Gastrocnemius medialis (tissue), 4 donors: ENCODE measurements at regions of chr5 and their contacts with region 1.

Region 1: GRCh38 chr5:147558826-147559225 is 49.0 kb upstream of the DPYSL3 start:
- DNase-seq: peak; percentile 11 to 40
- ATAC-seq: peak; percentile 87 to 92
- H3K4me3 ChIP-seq: no peak overlapping the region
- H3K27ac ChIP-seq: no peak overlapping the region
- H3K4me1 ChIP-seq: peaks cover 0 to 10% of the 10 kb centered on the region in 2 donors
- H3K27me3 ChIP-seq: no peaks in the 10 kb centered on the region
- CTCF ChIP-seq: peak; percentile 56 to 73 (median 66)
- POLR2A ChIP-seq: no peak

Region 2: GRCh38 chr5:147393874-147394672 is 164.8 kb before region 1 on chr5:
- in situ Hi-C with region 1: no loop called
- intact Hi-C with region 1: loop called (anchors 2 kb)
- DNase-seq: no peak
- ATAC-seq: no peak
- H3K4me3 ChIP-seq: no peak overlapping the region
- H3K27ac ChIP-seq: no peak overlapping the region
- H3K4me1 ChIP-seq: no peaks in the 10 kb centered on the region
- H3K27me3 ChIP-seq: no peaks in the 10 kb centered on the region
- CTCF ChIP-seq: peak in 2 of 5 experiments; percentile 7 to 8
- POLR2A ChIP-seq: no peak

Region 3: DNA sequence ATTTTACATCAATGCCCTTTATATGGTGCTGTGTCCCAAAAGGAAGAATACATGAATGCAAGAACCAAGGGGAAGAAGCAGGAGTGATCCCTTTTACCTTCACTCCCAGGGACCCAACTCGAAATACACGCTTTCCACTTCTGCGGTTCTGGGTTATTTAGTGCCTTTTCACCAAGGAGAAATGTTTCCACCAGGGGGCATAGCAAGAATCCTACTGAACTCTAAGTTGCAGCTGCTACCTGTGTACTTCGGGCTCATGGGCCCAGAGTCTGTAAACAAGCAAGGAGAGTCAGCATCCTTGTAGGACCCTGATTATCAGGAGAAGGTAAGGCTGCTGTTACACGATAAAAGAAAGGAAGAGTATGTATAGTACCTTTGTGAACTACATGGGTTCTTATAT is 94.6 kb before region 1 on chr5:
- in situ Hi-C with region 1: loop called in 3 of 4 experiments (anchors 5 to 25 kb)
- intact Hi-C with region 1: no loop called
- DNase-seq: no peak
- ATAC-seq: no peak
- H3K4me3 ChIP-seq: no peak overlapping the region
- H3K27ac ChIP-seq: no peak overlapping the region
- H3K4me1 ChIP-seq: peaks cover 15 to 19% of the 10 kb centered on the region in 2 donors
- H3K27me3 ChIP-seq: no peaks in the 10 kb centered on the region
- CTCF ChIP-seq: peak in 4 of 5 experiments; percentile 14 to 38 (median 26)
- POLR2A ChIP-seq: no peak

Region 4: GRCh38 chr5:147509710-147510651 is 48.8 kb before region 1 on chr5 and contains the start of gene DPYSL3:
- in situ Hi-C with region 1: no loop called
- intact Hi-C with region 1: loop called (anchors 5 kb)
- DNase-seq: peak; percentile 29 to 51
- ATAC-seq: peak; percentile 87 to 89
- H3K4me3 ChIP-seq: peak within 1 kb of the TSS; percentile 66 to 91 (median 76)
- H3K27ac ChIP-seq: peak within 1 kb of the TSS; percentile 57 to 71 (median 68)
- H3K4me1 ChIP-seq: peaks cover 0 to 13% of the 10 kb centered on the region in 2 donors
- H3K27me3 ChIP-seq: no peaks in the 10 kb centered on the region
- CTCF ChIP-seq: peak in 3 of 5 experiments; percentile 1 to 41 (median 36)
- POLR2A ChIP-seq: peak; percentile 16 to 17
- total RNA-seq, gene DPYSL3: 11.7 to 45.8 (median 26.0) TPM